ENCODE measurements at regions of chr4 and their contacts with region 1.

Region 1: DNA sequence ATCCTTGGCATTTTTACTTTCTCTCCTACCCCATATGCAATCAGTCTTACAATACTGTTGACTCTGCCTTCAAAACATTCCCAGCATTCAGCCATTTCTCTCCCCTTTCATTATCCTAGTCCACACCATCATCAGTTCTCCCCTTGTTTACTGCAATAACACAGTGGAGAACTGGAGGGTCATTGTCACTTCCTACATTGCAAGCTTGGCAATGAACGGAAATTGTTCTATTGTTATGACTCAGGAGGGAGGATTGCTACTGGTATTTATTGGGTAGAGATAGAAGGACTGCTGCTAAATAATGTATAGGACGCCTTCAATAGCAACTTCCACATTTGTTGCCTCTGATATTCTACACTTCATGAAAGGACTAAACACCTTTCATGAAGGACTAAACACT is 231.8 kb downstream of the BANK1 start:
- DNase-seq: no peak
- ATAC-seq: no peak
- H3K4me3 ChIP-seq: no peak overlapping the region
- H3K27ac ChIP-seq: no peak overlapping the region
- H3K4me1 ChIP-seq: no peaks in the 10 kb centered on the region
- H3K27me3 ChIP-seq: no peaks in the 10 kb centered on the region
- CTCF ChIP-seq: no peak

Region 2: DNA sequence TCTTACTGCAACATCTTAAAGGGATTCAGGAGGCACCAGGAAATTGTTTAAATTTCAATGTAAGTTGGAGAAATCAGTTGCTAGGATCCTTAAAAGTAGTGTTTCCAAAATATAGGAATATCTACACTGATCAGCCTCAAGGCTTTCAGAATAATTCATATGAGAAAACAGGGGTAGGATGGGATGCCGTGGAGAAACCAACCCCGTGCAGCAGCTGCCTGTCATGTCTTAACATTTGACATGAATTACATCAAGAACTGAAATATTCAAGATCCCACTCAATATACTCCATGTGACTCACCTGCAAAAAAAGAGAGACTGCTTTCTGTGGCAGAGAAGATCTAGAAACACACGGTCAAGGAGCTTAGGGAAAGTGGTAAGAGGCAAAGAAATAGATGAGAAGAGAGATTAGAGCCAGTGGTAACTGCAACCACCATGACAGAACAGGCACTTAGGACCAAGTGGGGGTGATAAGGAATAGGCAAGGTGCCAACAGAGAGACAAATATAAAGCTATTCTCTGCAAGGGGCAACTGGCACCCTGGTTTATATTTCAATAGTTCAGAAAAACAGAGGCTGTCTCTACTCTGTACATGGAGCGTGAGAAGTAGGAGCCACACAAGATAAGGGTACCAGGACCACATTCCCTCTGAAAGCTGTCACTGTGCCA is 259.0 kb after region 1 on chr4:
- CTCF ChIA-PET with region 1: no interaction called
- POLR2A ChIA-PET with region 1: interaction called, 14 read pairs
- in situ Hi-C with region 1: no loop called
- intact Hi-C with region 1: no loop called
- DNase-seq: no peak
- ATAC-seq: no peak
- H3K4me3 ChIP-seq: no peak overlapping the region
- H3K27ac ChIP-seq: no peak overlapping the region
- H3K4me1 ChIP-seq: no peaks in the 10 kb centered on the region
- H3K27me3 ChIP-seq: no peaks in the 10 kb centered on the region; the same call in 1 of the 2 replicates
- CTCF ChIP-seq: no peak